ENCODE measurements at regions of chr9 and their contacts with region 1.

Region 1: DNA sequence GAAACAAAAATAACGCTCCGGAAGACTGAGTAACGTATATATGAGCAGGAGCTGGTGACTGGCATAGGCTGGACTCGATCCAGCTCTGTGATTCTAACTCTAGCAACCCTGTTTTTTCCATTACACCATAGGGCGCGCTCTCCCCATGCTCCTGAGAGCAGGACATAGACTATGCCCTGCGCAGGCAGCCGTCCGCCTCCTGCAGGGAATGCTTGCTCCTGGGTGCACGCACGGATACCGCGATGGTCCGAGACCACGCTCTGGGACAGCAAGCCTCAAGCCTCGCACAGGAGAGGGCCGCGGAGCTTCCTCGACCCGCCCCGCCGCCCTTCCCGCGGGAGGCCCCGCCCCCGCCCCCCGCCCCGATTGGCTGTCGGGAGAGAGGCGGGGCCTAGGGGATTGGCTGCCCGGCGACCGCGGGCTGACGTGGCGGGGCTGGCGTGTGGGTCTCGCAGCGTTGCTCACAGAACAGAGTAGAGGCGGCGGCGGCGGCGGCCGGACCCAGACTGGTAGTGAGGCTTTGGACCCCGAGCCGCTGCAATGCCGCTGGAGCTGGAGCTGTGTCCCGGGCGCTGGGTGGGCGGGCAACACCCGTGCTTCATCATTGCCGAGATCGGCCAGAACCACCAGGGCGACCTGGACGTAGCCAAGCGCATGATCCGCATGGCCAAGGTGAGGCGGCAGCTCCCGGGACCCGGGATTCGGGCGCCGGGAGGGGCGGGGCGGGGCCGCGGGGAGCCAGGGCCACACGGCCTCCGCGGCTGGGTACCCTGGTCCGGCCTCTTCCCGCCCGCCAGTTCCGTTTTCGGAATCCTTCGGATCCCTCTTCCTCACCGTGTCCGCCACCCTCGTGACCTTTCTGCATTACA is at the start of gene NANS:
- DNase-seq: peak; percentile 91 to 92
- H3K4me3 ChIP-seq: peak within 1 kb of the TSS; percentile 79 to 88
- H3K27ac ChIP-seq: peak within 1 kb of the TSS; percentile 89
- H3K4me1 ChIP-seq: no peaks in the 10 kb centered on the region
- H3K27me3 ChIP-seq: no peaks in the 10 kb centered on the region
- CTCF ChIP-seq: peak in 1 of 4 experiments; percentile 6
- POLR2A ChIP-seq: peak; percentile 94 to 97
- total RNA-seq, gene NANS: 37.5 to 187 (median 54.8) TPM

Region 2: DNA sequence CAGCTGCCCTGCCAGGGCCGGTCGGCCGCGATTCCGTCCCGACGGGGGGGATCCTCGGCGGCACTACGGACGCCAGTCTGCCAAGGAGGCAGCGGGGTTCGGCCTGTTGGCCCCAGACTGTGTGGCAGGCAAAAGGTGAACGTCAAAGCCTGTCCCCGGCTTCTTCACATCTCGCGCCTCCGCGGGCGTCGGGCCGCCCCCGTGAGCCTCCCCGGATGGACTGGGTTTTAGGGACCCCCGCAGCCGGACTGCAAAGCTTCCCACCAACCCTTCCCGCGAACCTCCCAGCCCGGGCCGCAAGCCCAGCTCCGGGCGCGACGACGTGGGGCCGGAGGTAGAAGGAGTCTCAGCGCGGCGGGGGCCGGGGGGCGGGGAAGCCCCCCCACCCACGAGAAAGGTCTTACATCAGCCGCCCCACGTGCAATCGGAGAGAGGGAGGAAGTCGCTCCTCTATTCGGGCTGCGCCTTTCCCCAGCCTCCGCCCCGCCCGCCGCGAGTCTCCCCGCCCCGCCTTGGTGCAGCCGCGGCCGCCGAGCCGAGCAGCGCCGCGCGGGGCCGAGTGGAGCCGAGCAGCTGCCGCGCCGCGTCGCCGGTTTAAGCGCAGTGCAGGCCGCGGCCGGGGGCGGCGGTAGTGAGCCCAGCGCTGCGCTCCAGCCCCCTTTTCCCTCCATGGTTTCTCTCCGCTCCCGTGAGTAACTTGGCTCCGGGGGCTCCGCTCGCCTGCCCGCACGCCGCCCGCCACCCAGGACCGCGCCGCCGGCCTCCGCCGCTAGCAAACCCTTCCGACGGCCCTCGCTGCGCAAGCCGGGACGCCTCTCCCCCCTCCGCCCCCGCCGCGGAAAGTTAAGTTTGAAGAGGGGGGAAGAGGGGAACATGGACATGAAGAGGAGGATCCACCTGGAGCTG is 73.6 kb before region 1 on chr9 and contains the start of gene ANP32B:
- intact Hi-C with region 1: loop called (anchors 5 kb)
- DNase-seq: peak; percentile 91 to 94
- H3K4me3 ChIP-seq: peak within 1 kb of the TSS; percentile 54 to 64
- H3K27ac ChIP-seq: peak within 1 kb of the TSS; percentile 96 to 98
- H3K4me1 ChIP-seq: no peaks in the 10 kb centered on the region
- H3K27me3 ChIP-seq: no peaks in the 10 kb centered on the region
- CTCF ChIP-seq: peak; percentile 46 to 97 (median 94)
- POLR2A ChIP-seq: peak; percentile 50 to 65
- total RNA-seq, gene ANP32B: 9.3 to 162 (median 40.4) TPM

Measured in uterus (tissue), 4 donors.